ENCODE measurements at regions of chr5 and their contacts with region 1.

Region 1: DNA sequence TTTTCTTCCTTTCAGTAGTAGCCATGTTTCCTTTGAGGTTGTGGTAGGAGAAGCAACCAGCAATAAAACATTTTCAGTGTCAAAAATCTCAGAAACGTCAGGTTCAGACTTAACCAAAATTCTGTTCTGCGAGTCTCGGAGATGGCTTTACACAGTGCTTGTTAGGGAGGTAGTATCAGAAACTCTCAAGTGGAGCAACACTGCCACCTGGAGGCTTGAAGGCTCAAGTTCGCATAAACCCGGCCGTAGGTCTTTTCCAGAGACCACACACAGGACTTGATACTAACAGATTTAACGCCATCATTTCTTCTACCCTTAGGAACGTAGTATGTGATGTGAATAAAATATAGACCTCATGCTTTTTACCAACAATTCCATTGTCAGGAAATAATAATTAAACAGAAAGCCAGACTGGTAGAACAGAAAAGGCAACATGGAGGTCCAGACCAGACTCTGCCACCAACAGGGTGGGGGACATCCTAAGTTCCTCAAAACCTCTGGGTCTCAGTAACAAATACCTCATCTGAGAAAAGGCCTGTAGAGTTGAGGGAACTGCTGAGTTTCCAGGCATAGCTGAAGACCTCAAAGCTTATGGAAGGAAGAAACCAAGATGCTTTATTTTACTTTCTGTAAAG is 8.5 kb downstream of the PTGER4 start:
- DNase-seq: peak; percentile 63
- ATAC-seq: peak; percentile 82
- H3K4me3 Mint-ChIP-seq: peak overlapping the region; percentile 70
- H3K27ac Mint-ChIP-seq: peak overlapping the region; percentile 57
- H3K4me1 Mint-ChIP-seq: peaks cover 70% of the 10 kb centered on the region
- H3K27me3 Mint-ChIP-seq: no peaks in the 10 kb centered on the region
- CTCF ChIP-seq: no peak

Region 2: DNA sequence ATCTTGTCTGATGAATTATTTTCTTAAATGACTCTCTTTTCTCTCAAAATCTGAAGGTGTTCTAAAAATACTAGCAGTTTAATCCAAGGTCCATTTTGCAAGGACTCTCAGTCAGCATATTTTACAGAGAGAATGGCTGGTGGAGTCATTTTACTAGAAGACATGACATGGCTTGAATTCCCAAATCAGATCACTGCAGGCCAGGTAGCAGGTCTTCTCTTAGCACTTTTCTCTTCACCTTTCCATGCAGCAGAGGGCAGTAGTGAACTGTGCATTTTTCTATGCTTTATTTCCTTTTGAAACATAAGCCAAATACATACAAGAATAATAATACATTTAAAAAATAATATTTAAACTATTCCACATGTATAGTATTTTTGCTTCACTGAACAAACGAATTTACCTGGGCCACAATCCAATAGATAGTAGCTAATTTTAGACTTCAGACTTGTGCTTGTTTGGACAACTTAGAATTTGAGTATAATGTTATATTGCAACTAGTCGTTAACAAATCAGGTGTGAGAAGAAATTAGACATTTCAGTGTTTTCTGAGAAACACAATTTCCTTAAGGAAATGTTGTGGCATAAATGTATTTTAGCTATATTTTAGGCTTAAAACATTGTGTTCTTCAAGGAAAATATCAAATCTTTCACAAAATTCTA is 974.1 kb before region 1 on chr5:
- CTCF ChIA-PET with region 1: interaction called, 7 read pairs
- POLR2A ChIA-PET with region 1: no interaction called
- intact Hi-C with region 1: loop called (anchors 1 kb)
- DNase-seq: no peak
- ATAC-seq: peak; percentile 45
- H3K4me3 Mint-ChIP-seq: no peak overlapping the region
- H3K27ac Mint-ChIP-seq: no peak overlapping the region
- H3K4me1 Mint-ChIP-seq: no peaks in the 10 kb centered on the region
- H3K27me3 Mint-ChIP-seq: no peaks in the 10 kb centered on the region
- CTCF ChIP-seq: no peak

Region 3: DNA sequence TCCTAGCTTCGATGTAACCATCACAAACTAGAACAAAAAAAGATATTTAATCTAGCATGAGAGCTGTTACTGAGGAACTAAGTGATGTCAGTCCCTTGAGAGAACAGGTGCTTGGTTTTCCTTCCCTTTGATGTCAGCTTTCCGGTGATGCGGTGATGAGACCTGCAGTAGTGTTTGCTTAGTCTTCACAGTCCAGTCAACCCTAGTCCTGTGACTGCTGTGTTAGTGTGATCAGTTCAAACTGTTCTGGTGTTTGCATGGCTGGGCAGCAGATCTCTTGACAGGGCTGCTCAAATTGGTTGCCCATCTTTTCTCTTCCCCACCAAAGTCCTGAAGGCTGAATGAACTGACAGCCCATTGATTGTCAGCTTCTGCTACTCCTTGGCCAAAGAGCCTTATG is 654.8 kb before region 1 on chr5:
- CTCF ChIA-PET with region 1: no interaction called
- POLR2A ChIA-PET with region 1: no interaction called
- intact Hi-C with region 1: loop called (anchors 1 kb)
- DNase-seq: peak; percentile 31
- ATAC-seq: peak; percentile 98
- H3K4me3 Mint-ChIP-seq: peak overlapping the region; percentile 21
- H3K27ac Mint-ChIP-seq: peak overlapping the region; percentile 80
- H3K4me1 Mint-ChIP-seq: peaks cover 36% of the 10 kb centered on the region
- H3K27me3 Mint-ChIP-seq: no peaks in the 10 kb centered on the region
- CTCF ChIP-seq: no peak

Region 4: GRCh38 chr5:40367255-40367654 is 321.0 kb before region 1 on chr5:
- CTCF ChIA-PET with region 1: interaction called, 20 read pairs
- POLR2A ChIA-PET with region 1: interaction called, 5 read pairs
- intact Hi-C with region 1: loop called (anchors 1 kb)
- DNase-seq: no peak
- ATAC-seq: peak; percentile 45
- H3K4me3 Mint-ChIP-seq: no peak overlapping the region
- H3K27ac Mint-ChIP-seq: no peak overlapping the region
- H3K4me1 Mint-ChIP-seq: peaks cover 13% of the 10 kb centered on the region
- H3K27me3 Mint-ChIP-seq: no peaks in the 10 kb centered on the region
- CTCF ChIP-seq: no peak

Region 5: GRCh38 chr5:40605295-40605958 is 82.8 kb before region 1 on chr5:
- CTCF ChIA-PET with region 1: no interaction called
- POLR2A ChIA-PET with region 1: no interaction called
- intact Hi-C with region 1: no loop called
- DNase-seq: no peak
- ATAC-seq: no peak
- H3K4me3 Mint-ChIP-seq: peak overlapping the region; percentile 63
- H3K27ac Mint-ChIP-seq: peak overlapping the region; percentile 50
- H3K4me1 Mint-ChIP-seq: peaks cover 56% of the 10 kb centered on the region
- H3K27me3 Mint-ChIP-seq: no peaks in the 10 kb centered on the region
- CTCF ChIP-seq: no peak

Region 6: GRCh38 chr5:40627706-40628105 is 60.5 kb before region 1 on chr5:
- CTCF ChIA-PET with region 1: no interaction called
- POLR2A ChIA-PET with region 1: no interaction called
- intact Hi-C with region 1: no loop called
- DNase-seq: no peak
- ATAC-seq: no peak
- H3K4me3 Mint-ChIP-seq: no peak overlapping the region
- H3K27ac Mint-ChIP-seq: no peak overlapping the region
- H3K4me1 Mint-ChIP-seq: peaks cover 22% of the 10 kb centered on the region
- H3K27me3 Mint-ChIP-seq: no peaks in the 10 kb centered on the region
- CTCF ChIP-seq: no peak

Region 7: DNA sequence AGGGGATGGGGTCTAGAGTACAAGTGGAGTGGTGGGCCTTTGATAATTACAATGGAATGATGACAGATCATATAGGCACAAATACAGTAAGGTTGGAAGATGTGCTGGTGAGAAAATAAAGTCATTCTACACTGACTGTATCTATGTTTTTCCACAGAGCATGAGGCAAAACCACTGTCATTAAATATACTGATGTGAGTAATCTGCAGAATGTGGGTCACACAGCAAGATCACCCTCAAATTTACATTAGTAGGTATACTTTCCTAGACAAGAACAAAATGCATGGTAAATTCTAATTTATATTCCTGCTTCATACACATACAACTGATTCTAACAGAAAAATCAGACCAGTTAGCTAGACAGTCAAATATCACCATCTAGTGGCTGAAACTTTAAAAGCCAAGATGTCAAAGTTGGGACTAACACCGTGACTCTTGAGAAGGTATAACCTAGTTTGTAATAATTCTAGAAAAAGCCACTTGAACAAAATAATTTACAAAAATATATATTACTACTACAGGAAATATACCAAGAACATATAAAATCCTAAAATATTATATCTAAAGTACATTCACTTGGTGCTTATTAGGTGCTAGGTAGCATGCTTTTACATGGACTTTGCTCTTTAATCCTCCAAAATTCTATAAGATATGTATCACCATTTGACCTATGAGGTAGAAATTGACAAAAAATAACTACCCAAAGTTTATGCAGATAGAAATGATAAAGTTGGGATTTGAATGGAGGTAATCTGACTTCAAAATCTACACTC is 48.0 kb after region 1 on chr5:
- CTCF ChIA-PET with region 1: interaction called, 6 read pairs
- POLR2A ChIA-PET with region 1: no interaction called
- intact Hi-C with region 1: loop called (anchors 1 kb)
- DNase-seq: no peak
- ATAC-seq: peak; percentile 42
- H3K4me3 Mint-ChIP-seq: no peak overlapping the region
- H3K27ac Mint-ChIP-seq: no peak overlapping the region
- H3K4me1 Mint-ChIP-seq: no peaks in the 10 kb centered on the region
- H3K27me3 Mint-ChIP-seq: no peaks in the 10 kb centered on the region
- CTCF ChIP-seq: no peak

Measured in activated B cell treated with CpG ODN at 0.5 μM for 24 hours (primary cell).